Activated T-helper 1 cell treated with anti-CD3 and anti-CD28 coated beads, Interleukin-12 subunit alpha, Interleukin-12 subunit beta, Interleukin-2, Interleukin-4 antibody, amounts not matched to agents 30 ng/mL and 10 ng/mL and 1 ng/mL, durations not matched to agents 14 hours and 24 hours and 36 hours (primary cell): ENCODE measurements at regions of chr9 and their contacts with region 1.

Region 1: GRCh38 chr9:94783102-94783664 is 56.7 kb downstream of the AOPEP start:
- DNase-seq: peak; percentile 11
- H3K4me3 Mint-ChIP-seq: no peak overlapping the region
- H3K27ac Mint-ChIP-seq: no peak overlapping the region
- H3K4me1 Mint-ChIP-seq: peaks cover 20% of the 10 kb centered on the region
- H3K27me3 Mint-ChIP-seq: no peaks in the 10 kb centered on the region

Region 2: GRCh38 chr9:94593459-94594345 is 189.5 kb before region 1 on chr9 and contains the start of gene FBP2:
- intact Hi-C with region 1: no loop called
- DNase-seq: no peak
- H3K4me3 Mint-ChIP-seq: no peak within 1 kb of the TSS
- H3K27ac Mint-ChIP-seq: no peak within 1 kb of the TSS
- H3K4me1 Mint-ChIP-seq: no peaks in the 10 kb centered on the region
- H3K27me3 Mint-ChIP-seq: peaks cover 6% of the 10 kb centered on the region
- total RNA-seq, gene FBP2: not detected in 2 replicates

Region 3: GRCh38 chr9:94681508-94681907 is 101.7 kb before region 1 on chr9:
- intact Hi-C with region 1: loop called (anchors 10 kb)
- DNase-seq: peak; percentile 43
- H3K4me3 Mint-ChIP-seq: no peak overlapping the region
- H3K27ac Mint-ChIP-seq: no peak overlapping the region
- H3K4me1 Mint-ChIP-seq: no peaks in the 10 kb centered on the region
- H3K27me3 Mint-ChIP-seq: peaks cover 27% of the 10 kb centered on the region

Region 4: GRCh38 chr9:94746541-94747370 is 36.4 kb before region 1 on chr9:
- intact Hi-C with region 1: no loop called
- DNase-seq: no peak
- H3K4me3 Mint-ChIP-seq: no peak overlapping the region
- H3K27ac Mint-ChIP-seq: no peak overlapping the region
- H3K4me1 Mint-ChIP-seq: no peaks in the 10 kb centered on the region
- H3K27me3 Mint-ChIP-seq: peaks cover 1% of the 10 kb centered on the region

Region 5: GRCh38 chr9:94757158-94757557 is 26.0 kb before region 1 on chr9:
- intact Hi-C with region 1: no loop called
- DNase-seq: no peak
- H3K4me3 Mint-ChIP-seq: no peak overlapping the region
- H3K27ac Mint-ChIP-seq: no peak overlapping the region
- H3K4me1 Mint-ChIP-seq: peaks cover 6% of the 10 kb centered on the region
- H3K27me3 Mint-ChIP-seq: no peaks in the 10 kb centered on the region

Region 6: GRCh38 chr9:94767331-94768072 is 15.7 kb before region 1 on chr9:
- intact Hi-C with region 1: no loop called
- DNase-seq: no peak
- H3K4me3 Mint-ChIP-seq: no peak overlapping the region
- H3K27ac Mint-ChIP-seq: no peak overlapping the region
- H3K4me1 Mint-ChIP-seq: no peaks in the 10 kb centered on the region
- H3K27me3 Mint-ChIP-seq: no peaks in the 10 kb centered on the region

Region 7: GRCh38 chr9:94900222-94901018 is 117.2 kb after region 1 on chr9:
- intact Hi-C with region 1: loop called (anchors 10 kb)
- DNase-seq: no peak
- H3K4me3 Mint-ChIP-seq: peak overlapping the region; percentile 34
- H3K27ac Mint-ChIP-seq: peak overlapping the region; percentile 82
- H3K4me1 Mint-ChIP-seq: peaks cover 41% of the 10 kb centered on the region
- H3K27me3 Mint-ChIP-seq: peaks cover 6% of the 10 kb centered on the region